Aorta (tissue), 5 donors: ENCODE measurements at regions of chr6 and their contacts with region 1.

Region 1: GRCh38 chr6:72748759-72749158 is 126.9 kb downstream of the KCNQ5 start:
- DNase-seq: no peak
- ATAC-seq: peak; percentile 29
- H3K4me3 ChIP-seq: no peak overlapping the region
- H3K27ac ChIP-seq: no peak overlapping the region
- H3K4me1 ChIP-seq: peaks cover 2 to 8% of the 10 kb centered on the region in 2 donors
- H3K27me3 ChIP-seq: no peaks in the 10 kb centered on the region

Region 2: GRCh38 chr6:72798196-72798595 is 49.4 kb after region 1 on chr6:
- intact Hi-C with region 1: loop called in 1 of 2 experiments (anchors 2 kb)
- DNase-seq: no peak
- ATAC-seq: no peak
- H3K4me3 ChIP-seq: no peak overlapping the region
- H3K27ac ChIP-seq: no peak overlapping the region
- H3K4me1 ChIP-seq: no peaks in the 10 kb centered on the region
- H3K27me3 ChIP-seq: no peaks in the 10 kb centered on the region

Region 3: DNA sequence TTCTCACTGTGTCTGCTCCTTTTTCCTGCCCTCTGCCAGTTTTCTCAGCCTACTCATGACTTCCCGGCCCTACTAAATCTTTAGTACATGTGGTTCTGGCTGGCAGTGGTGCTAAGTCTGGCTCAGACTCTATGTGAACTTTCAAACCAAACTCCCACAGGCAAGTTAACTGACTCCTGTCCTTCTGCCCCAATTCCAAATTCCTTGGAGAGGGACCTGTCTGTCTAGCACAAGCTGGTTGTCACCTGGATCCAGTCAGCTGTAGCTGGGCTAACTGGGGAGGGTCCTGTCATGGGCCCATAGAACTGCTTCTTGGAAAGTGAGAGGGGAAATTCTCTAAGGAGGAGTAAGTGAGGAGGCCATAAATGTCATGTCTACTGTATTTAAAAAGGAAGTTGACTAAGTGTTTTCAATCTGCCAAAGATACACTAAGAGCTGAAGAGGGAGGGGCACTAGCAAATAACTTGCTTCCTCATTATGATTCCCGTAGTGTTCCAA is 113.2 kb after region 1 on chr6:
- intact Hi-C with region 1: loop called in 1 of 2 experiments (anchors 5 kb)
- DNase-seq: peak in 1 of 2 donors; percentile 75
- ATAC-seq: peak; percentile 87
- H3K4me3 ChIP-seq: no peak overlapping the region
- H3K27ac ChIP-seq: peak overlapping the region; percentile 23 to 78
- H3K4me1 ChIP-seq: peaks cover 6 to 8% of the 10 kb centered on the region in 2 donors
- H3K27me3 ChIP-seq: no peaks in the 10 kb centered on the region

Region 4: DNA sequence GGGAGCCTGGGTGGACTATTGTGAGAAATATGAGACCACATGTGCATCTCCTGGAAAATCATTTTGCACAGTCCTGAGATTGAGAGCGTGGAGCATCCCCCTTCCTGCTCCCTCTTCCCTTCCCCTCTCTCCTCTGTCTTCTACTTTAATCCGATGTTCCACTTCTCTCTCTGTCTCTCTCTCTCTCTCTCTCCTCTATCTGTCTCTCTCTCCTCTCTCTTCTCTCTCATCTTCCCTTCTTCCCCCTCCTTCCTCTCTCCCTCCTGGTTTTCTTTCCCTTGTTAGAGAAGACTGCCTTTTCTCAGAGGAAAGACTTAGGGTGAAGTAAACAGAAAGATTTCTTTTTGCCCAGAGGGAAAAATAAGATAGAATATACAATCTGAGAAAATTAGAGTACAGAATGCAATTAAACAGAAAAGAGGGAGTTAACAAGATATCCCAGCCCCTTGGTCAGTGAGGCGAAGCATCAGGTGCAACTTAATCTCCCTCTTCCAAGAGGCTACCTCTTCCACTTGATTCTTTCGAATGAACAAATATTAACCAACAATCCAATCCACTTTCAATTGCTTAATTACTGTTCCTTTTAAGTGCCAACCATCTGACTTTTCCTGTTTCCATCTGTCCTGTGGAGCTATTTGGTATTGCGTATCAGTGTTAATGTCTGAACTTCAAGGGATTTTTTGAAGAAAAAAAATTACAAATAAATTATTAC is 499.6 kb after region 1 on chr6:
- intact Hi-C with region 1: no loop called
- DNase-seq: no peak
- ATAC-seq: no peak
- H3K4me3 ChIP-seq: no peak overlapping the region
- H3K27ac ChIP-seq: no peak overlapping the region
- H3K4me1 ChIP-seq: no peaks in the 10 kb centered on the region
- H3K27me3 ChIP-seq: no peaks in the 10 kb centered on the region

Region 5: DNA sequence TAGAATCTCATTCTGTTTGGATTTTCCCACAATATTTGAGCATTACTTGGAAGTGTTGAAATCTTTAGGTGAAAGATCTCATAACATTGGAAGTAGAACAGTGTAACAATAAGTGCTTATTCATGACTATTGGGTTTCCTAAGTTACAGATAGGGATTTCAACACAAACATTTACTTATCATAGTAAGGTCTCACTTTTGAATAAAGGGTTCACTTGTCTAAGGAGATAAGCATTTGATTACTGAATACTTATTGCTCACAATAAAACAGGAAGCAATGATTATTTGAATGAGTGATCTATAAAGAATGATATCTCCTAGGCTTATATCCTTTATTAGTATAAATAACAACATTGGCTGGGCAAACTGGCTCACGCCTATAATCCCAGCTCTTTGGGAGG is 660.6 kb after region 1 on chr6:
- intact Hi-C with region 1: no loop called
- DNase-seq: no peak
- ATAC-seq: no peak
- H3K4me3 ChIP-seq: no peak overlapping the region
- H3K27ac ChIP-seq: no peak overlapping the region
- H3K4me1 ChIP-seq: no peaks in the 10 kb centered on the region
- H3K27me3 ChIP-seq: no peaks in the 10 kb centered on the region